ENCODE measurements at regions of chr1 and their contacts with region 1.

Region 1: GRCh38 chr1:112369392-112370285 is 26.4 kb upstream of the CTTNBP2NL start:
- DNase-seq: peak; percentile 86
- ATAC-seq: peak; percentile 99
- H3K4me3 Mint-ChIP-seq: no peak overlapping the region
- H3K27ac Mint-ChIP-seq: no peak overlapping the region
- H3K4me1 Mint-ChIP-seq: peaks cover 4% of the 10 kb centered on the region
- H3K27me3 Mint-ChIP-seq: peaks cover 56% of the 10 kb centered on the region

Region 2: GRCh38 chr1:112358798-112359408 is 10.7 kb before region 1 on chr1:
- CTCF ChIA-PET with region 1: interaction called, 20 read pairs
- DNase-seq: peak; percentile 51
- ATAC-seq: peak; percentile 68
- H3K4me3 Mint-ChIP-seq: no peak overlapping the region
- H3K27ac Mint-ChIP-seq: no peak overlapping the region
- H3K4me1 Mint-ChIP-seq: no peaks in the 10 kb centered on the region
- H3K27me3 Mint-ChIP-seq: peaks cover 50% of the 10 kb centered on the region

Measured in activated CD8-positive, alpha-beta memory T cell treated with anti-CD3 and anti-CD28 coated beads, Interleukin-2, amount 10 ng/mL, durations not matched to agents 7 days and 5 days (primary cell).